ENCODE measurements at regions of chr18 and their contacts with region 1.

Region 1: GRCh38 chr18:13813271-13813849 is 10.6 kb upstream of the MC5R start:
- DNase-seq: peak; percentile 73
- CTCF ChIP-seq: peak; percentile 86

Region 2: DNA sequence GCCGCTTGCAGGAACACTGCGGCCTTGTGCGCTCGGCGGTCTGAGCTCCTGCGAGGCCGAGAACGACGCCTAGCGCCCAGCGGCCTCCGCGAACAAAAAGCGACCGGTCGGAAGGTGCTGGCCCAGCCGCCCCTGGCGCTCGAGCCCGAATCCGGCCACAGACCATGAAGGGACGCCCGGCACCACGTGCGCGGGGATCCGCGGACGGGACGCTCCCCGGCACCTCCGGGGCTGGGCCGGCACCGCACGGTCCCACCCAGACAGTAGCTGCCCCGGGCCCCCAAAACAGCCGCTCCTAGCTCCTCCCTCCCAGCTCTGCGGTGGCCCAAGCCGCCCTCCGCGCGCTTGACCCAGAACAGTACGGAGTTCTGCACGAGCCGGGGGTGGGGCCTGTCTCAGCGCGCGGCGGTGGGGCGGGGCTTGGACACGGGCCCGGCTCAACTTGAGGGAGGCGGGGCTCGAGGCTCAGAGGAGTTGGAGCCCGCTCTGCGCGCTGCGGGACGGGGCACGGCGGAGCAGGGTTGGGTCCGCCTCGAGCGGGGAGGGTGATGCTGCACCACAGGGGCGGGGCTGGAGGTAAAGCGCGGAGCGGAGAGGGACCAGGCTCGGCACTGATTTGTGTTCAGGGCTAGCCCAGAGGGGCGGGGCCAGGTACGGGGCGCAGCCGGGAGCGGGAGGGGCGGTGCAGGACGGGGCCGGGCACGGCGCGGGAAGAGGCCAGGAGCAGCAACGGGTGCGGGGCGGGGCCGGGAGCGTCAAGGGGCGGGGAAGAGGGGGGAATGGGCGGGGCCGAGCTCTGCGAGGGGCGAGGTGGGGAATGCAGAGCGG is 1832.6 kb before region 1 on chr18:
- CTCF ChIA-PET with region 1: no interaction called
- POLR2A ChIA-PET with region 1: no interaction called
- DNase-seq: peak; percentile 96
- CTCF ChIP-seq: peak; percentile 17

Region 3: DNA sequence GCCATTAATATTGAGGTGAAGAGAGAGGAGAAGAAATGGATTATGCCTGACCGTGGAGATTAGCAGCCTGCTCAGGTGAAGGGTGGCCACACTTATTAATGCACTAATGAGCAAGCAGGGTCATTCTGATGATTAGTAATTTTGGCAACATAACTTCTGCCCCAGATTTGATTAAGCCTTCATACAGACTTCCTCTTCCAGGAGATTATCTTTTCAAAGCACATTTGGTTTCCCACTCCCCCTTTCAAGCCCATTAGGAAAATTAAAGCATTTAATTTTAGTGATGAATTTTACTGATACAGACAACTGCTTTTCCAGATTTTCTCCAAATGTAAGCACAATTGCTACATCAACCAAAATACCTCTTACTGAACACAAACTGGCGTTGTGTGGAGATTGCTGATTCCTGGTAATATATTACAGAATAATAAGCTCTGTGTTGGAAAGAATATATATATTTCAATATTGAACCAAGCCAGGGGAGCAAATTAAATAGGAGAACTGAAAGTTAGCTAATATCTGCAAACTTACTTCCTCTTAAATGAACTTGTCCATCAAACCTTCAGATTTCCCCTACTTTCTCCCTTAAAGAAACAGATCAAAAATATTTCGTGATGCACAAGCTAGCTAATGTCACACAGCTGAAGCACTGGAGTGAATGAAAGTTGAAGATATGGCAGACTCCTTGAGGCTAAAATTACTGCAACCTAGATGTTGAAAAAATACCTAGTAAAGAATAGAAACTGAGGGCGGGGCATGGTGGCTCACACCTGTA is 227.8 kb before region 1 on chr18:
- CTCF ChIA-PET with region 1: no interaction called
- POLR2A ChIA-PET with region 1: no interaction called
- DNase-seq: peak; percentile 57
- CTCF ChIP-seq: no peak

Region 4: GRCh38 chr18:13730481-13730880 is 82.9 kb before region 1 on chr18:
- CTCF ChIA-PET with region 1: no interaction called
- POLR2A ChIA-PET with region 1: no interaction called
- DNase-seq: no peak
- CTCF ChIP-seq: no peak

Region 5: GRCh38 chr18:13800505-13801259 is 12.7 kb before region 1 on chr18:
- CTCF ChIA-PET with region 1: interaction called, 38 read pairs
- POLR2A ChIA-PET with region 1: no interaction called
- DNase-seq: peak; percentile 64
- CTCF ChIP-seq: peak; percentile 44

Region 6: GRCh38 chr18:13823707-13824395 is 10.5 kb after region 1 on chr18 and contains the start of gene MC5R:
- CTCF ChIA-PET with region 1: interaction called, 29 read pairs
- POLR2A ChIA-PET with region 1: no interaction called
- DNase-seq: peak; percentile 90
- CTCF ChIP-seq: peak; percentile 99